ENCODE measurements at regions of chr20 and their contacts with region 1.

Region 1: DNA sequence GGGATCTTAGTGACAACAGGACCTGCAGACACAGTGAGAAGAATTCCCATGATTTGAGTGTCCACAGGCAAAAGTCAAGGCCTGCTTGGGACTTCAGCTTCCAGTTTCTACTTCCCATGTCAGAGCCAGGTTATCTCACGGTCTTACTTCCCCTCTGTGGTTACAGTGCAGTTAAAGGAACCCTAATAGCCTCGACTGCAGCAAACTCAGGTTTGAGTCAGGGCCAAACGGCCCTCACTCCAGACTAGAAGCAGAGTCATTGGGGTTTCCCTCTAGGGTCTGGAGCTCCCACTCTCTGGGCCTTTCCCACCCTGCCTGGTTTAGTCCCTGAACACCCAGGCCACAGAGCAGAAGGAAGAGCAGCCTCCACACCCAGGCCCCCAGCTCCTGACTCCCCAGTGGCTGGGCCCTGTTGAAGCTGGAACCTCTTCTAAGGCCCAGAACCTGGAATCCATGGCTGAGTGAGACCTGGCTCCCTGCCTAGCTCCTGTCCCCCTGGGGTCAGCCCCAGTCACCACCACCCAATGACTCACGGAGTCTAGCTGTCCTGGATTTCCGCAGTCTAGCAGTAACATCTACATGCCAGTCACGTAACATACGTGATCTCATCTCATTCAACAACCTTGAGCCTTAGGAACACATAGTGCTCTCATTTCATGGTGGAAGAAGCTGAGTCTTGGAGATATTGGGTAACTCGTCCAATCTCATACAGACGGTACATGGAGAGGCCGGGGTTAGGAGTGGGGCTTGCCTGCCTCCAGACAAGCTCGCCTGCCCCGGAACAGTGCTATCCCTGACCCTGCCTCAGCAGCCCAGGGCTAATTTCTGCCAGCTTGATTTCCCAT is 9.2 kb upstream of the GHRH start:
- DNase-seq: peak; percentile 83 to 95 (median 94)
- H3K4me3 ChIP-seq: no peak overlapping the region
- H3K27ac ChIP-seq: peak overlapping the region in 1 of 2 experiments; percentile 55
- H3K4me1 ChIP-seq: peaks cover 14 to 54% (median 42%) of the 10 kb centered on the region in 4 experiments
- H3K27me3 ChIP-seq: no peaks in the 10 kb centered on the region

Region 2: DNA sequence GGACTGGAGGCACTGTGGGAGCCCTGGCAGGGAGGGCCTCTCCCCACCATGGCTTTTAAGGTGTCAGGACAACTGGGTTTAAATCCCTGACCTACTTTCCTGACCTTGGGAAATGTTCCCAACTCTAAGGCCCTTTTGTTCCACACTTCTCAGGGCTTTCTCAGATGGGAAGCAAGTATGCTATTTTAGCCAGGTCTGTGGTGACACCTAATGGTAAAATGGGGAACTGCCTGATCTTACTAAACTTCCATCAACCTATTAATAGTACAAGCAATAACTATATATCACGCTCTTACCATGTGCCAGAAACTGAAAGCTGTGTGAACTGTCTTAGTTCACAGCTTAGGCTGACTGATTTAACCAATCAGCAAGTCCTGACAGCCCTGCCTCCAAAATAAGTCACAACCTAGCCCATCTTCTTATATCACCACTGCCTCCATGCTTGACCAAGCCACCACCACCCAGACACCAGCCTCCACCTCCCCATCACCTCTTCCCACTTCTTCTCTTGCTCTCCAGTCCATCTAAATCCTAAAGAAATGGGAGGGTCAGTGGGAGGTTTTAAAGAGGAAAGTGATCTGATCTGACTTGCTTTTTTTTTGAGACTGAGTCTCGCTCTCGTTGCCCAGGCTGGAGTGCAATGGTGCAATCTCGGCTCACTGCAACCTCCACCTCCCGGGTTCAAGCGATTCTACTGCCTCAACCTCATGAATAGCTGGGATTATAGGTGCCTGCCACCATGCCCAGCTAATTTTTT is 263.8 kb after region 1 on chr20:
- CTCF ChIA-PET with region 1: interaction called, 81 read pairs
- POLR2A ChIA-PET with region 1: no interaction called
- DNase-seq: peak; percentile 80 to 90 (median 88)
- H3K4me3 ChIP-seq: no peak overlapping the region
- H3K27ac ChIP-seq: no peak overlapping the region
- H3K4me1 ChIP-seq: peaks cover 0 to 12% (median under 1%) of the 10 kb centered on the region in 4 experiments
- H3K27me3 ChIP-seq: no peaks in the 10 kb centered on the region

Region 3: GRCh38 chr20:37543828-37544227 is 273.0 kb after region 1 on chr20:
- CTCF ChIA-PET with region 1: interaction called, 14 read pairs
- POLR2A ChIA-PET with region 1: no interaction called
- DNase-seq: peak in 2 of 3 donors; percentile 43 to 44
- H3K4me3 ChIP-seq: no peak overlapping the region
- H3K27ac ChIP-seq: no peak overlapping the region
- H3K4me1 ChIP-seq: peaks cover 0 to 15% (median 7%) of the 10 kb centered on the region in 4 experiments
- H3K27me3 ChIP-seq: peaks cover 0 to 30% (median 6%) of the 10 kb centered on the region in 5 experiments

Measured in common myeloid progenitor, CD34-positive (primary cell).